Panc1 (cell line): ENCODE measurements at regions of chr15 and their contacts with region 1.

Region 1: DNA sequence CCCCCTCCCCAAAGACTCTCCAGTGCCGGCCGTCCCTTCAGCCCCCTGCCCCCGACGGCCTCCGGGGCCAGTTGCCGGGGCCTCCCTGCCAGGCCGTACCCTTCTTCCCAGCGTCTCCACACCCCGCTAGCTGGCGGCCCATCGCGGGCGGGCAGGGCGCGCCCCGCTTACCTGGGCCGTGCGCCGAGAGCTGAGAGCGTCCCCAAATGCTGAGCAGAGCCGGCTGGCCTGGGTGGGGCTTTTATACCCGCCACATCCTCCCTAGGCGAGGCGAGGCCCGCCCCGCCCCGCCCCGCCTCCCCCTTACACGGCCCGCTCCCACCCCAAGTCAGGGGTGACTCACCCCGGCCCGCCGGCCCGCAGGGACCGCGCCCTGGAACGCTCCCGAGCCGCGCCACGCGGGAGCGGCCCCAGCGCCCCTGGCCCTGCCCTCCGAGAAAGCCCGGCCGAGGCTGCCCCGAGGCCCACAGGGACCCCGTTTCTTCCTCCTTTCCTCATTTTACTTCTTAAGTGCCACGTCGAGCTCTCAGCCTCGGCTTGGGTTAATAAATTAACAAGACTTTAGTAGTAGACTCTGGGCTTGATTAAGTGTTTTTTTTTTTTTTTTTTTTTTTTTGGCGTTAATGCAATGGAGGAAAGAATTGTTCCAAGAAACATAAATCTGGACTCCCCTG is at the start of gene ANXA2:
- DNase-seq: no peak
- ATAC-seq: peak; percentile 64
- H3K4me3 ChIP-seq: peak within 1 kb of the TSS; percentile 88 to 93
- H3K27ac ChIP-seq: peak within 1 kb of the TSS; percentile 100
- H3K4me1 ChIP-seq: peaks cover 56% of the 10 kb centered on the region
- H3K27me3 ChIP-seq: no peaks in the 10 kb centered on the region
- CTCF ChIP-seq: no peak
- total RNA-seq, gene ANXA2: 1,903 TPM

Region 2: DNA sequence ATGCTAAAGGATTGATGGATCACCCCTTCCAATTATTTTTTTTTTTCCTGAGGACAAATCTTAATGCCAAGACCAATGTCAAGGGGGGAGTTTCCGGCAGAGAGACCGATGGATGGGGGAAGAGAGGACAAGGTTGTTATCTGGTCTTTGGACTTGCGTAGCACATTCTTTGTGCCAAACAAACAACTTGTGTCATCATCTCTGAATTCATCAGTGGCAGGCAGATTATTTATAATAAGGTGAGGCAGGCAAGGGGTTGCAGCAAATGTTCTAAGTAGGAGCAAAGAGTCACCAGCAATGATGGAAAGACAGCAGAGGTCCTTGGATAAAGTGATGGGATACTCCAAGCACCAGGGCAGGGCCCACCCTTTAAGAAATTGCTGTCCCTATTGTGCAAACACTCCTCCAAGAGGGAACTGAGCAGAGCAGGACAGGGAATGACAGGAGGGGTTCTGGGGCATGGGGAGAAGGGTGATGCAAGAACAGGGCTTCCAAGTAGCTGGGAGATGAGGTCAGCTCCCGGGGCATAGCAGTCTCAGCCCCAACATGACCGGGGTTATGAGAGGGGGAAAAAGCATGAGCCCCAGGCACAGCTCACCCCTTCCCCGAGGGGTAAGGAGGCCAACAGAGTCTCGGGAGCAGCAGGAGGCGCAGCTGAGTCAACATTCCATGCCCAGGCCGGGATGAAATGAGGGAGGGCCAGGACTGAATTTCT is 57.5 kb before region 1 on chr15:
- CTCF ChIA-PET with region 1: no interaction called
- POLR2A ChIA-PET with region 1: no interaction called
- in situ Hi-C with region 1: no loop called
- intact Hi-C with region 1: no loop called
- DNase-seq: no peak
- ATAC-seq: no peak
- H3K4me3 ChIP-seq: no peak overlapping the region
- H3K27ac ChIP-seq: no peak overlapping the region
- H3K4me1 ChIP-seq: peaks cover 22% of the 10 kb centered on the region
- H3K27me3 ChIP-seq: no peaks in the 10 kb centered on the region
- CTCF ChIP-seq: peak; percentile 19; the same call in 1 of the 2 replicates

Region 3: GRCh38 chr15:60408438-60409105 is 10.7 kb after region 1 on chr15:
- CTCF ChIA-PET with region 1: no interaction called
- POLR2A ChIA-PET with region 1: interaction called, 21 read pairs
- in situ Hi-C with region 1: no loop called
- intact Hi-C with region 1: no loop called
- DNase-seq: no peak
- ATAC-seq: peak; percentile 59; the same call in 1 of the 2 replicates
- H3K4me3 ChIP-seq: no peak overlapping the region
- H3K27ac ChIP-seq: peak overlapping the region; percentile 55
- H3K4me1 ChIP-seq: peaks cover 19% of the 10 kb centered on the region
- H3K27me3 ChIP-seq: no peaks in the 10 kb centered on the region
- CTCF ChIP-seq: no peak

Region 4: DNA sequence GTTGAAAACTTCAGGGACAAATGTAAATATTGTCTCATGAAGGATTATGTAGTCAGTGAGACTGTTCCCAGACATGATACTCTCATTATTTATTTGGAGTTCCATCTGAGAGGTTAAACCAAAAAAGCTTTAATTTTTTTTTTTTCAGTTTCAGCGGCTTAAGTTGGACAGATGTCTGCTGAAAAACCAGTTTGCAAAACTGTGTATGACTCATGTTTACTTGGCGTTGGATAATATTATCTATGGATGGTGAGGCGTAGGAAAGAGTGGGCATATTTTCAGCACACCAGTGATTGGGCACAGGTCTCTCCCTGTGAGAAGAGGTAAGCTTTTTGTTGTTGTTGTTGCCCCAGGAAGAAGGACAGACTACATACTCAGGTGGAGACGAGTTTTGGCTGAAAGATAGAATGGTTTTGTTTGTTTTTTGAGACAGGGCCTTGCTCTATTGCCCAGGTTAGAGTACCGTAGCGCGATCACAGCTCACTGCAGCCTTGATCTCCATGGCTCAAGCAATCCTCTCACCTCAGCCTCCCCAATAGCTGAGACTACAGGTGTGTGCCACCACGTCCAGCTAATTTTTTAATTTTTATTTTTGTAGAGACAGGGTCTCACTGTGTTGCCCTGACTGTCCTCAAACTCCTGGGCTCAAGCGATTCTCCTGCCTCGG is 16.2 kb after region 1 on chr15:
- CTCF ChIA-PET with region 1: no interaction called
- POLR2A ChIA-PET with region 1: interaction called, 10 read pairs
- in situ Hi-C with region 1: no loop called
- intact Hi-C with region 1: no loop called
- DNase-seq: no peak
- ATAC-seq: peak; percentile 74
- H3K4me3 ChIP-seq: no peak overlapping the region
- H3K27ac ChIP-seq: peak overlapping the region; percentile 70
- H3K4me1 ChIP-seq: peaks cover 14% of the 10 kb centered on the region
- H3K27me3 ChIP-seq: no peaks in the 10 kb centered on the region
- CTCF ChIP-seq: no peak

Region 5: GRCh38 chr15:60426870-60427508 is 29.1 kb after region 1 on chr15:
- CTCF ChIA-PET with region 1: no interaction called
- POLR2A ChIA-PET with region 1: interaction called, 12 read pairs
- in situ Hi-C with region 1: no loop called
- intact Hi-C with region 1: no loop called
- DNase-seq: no peak
- ATAC-seq: peak; percentile 60; the same call in 1 of the 2 replicates
- H3K4me3 ChIP-seq: no peak overlapping the region
- H3K27ac ChIP-seq: no peak overlapping the region
- H3K4me1 ChIP-seq: no peaks in the 10 kb centered on the region
- H3K27me3 ChIP-seq: no peaks in the 10 kb centered on the region
- CTCF ChIP-seq: no peak

Region 6: DNA sequence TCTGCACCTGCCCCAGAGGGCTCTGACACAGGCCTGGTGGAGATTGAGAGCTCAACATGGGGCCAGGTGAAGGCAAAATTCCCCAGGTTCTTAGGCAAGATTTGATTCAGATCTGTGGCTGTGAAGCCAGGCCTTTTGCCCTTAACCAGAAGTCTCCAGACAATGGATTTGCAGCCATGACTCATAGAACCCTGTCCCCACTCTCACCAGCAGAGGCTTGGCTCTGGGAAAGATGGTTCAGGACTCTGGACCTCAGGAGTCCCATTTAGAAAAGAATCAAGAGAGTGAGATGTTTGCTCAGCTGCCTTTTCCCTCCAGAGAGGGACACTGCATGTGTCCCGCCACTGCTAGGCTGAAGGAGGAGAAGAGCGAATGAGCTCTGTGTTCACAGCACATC is 442.4 kb after region 1 on chr15:
- CTCF ChIA-PET with region 1: no interaction called
- POLR2A ChIA-PET with region 1: interaction called, 15 read pairs
- in situ Hi-C with region 1: no loop called
- intact Hi-C with region 1: no loop called
- DNase-seq: no peak
- ATAC-seq: no peak
- H3K4me3 ChIP-seq: no peak overlapping the region
- H3K27ac ChIP-seq: no peak overlapping the region
- H3K4me1 ChIP-seq: no peaks in the 10 kb centered on the region
- H3K27me3 ChIP-seq: 0 out of 2 replicates have a peak, but pooled peaks cover 3% of the 10 kb centered on the region
- CTCF ChIP-seq: no peak